Sigmoid colon (tissue), 7 donors: ENCODE measurements at regions of chr12 and their contacts with region 1.

Region 1: DNA sequence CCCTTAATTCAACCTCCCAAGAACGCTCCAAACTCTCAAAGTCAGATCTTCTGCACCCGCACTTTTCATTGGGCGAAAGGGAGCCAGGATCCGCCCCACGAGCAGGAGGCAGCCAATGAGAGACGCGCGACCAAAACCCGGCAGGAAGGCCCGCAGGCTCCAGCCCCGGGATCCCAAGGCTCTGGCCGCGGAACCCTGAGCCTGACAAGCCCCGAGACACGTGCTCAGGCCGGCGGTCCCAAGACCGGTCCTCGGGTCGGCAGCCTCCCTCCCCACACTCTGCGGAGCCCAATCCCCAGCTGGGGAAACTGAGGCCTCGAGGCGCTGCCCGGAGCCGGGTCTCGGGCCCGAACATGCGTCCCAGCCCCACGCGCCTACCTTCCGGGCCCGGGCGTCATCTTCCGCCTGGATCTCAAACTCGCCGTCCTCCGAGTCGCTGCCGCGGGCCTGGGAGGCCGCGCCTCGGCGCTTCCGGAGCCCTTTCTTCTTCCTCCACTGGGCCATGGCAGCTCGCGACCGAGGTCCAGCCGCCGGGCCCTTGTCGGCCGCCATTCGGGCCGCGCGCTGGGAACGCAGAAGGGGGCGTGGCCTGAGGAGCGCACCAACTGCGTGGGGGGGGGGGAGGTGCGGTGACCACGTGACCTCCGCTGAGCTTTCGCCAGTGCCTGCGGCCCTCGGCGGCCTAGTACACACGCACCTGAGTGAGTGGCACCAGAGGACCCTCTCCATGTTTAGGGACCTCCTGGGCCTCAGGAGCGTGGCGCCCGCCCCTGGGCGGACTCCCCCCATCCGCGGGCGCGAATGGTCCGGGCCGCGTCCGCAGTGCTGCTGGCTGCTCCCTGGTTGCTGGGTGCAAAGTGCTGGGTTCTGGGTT is at the starts of genes DDX54 and RITA1:
- DNase-seq: peak; percentile 95
- H3K4me3 ChIP-seq: peak within 1 kb of the TSS; percentile 77 to 99 (median 86)
- H3K27ac ChIP-seq: peak within 1 kb of the TSS; percentile 93 to 97 (median 96)
- H3K4me1 ChIP-seq: peaks cover 0 to 30% (median 26%) of the 10 kb centered on the region in 4 donors
- H3K27me3 ChIP-seq: no peaks in the 10 kb centered on the region
- CTCF ChIP-seq: no peak
- EP300 ChIP-seq: no peak
- POLR2A ChIP-seq: no peak
- total RNA-seq, gene DDX54: 24.5 to 47.4 (median 40.8) TPM
- total RNA-seq, gene RITA1: 12.5 to 18.3 (median 15.5) TPM

Region 2: GRCh38 chr12:113120670-113121370 is 64.3 kb before region 1 on chr12:
- intact Hi-C with region 1: no loop called
- DNase-seq: no peak
- H3K4me3 ChIP-seq: no peak overlapping the region
- H3K27ac ChIP-seq: no peak overlapping the region
- H3K4me1 ChIP-seq: no peaks in the 10 kb centered on the region
- H3K27me3 ChIP-seq: peaks cover 0 to 17% (median 6%) of the 10 kb centered on the region in 3 donors
- CTCF ChIP-seq: no peak
- EP300 ChIP-seq: no peak
- POLR2A ChIP-seq: no peak

Region 3: GRCh38 chr12:113221181-113221997 is 36.3 kb after region 1 on chr12 and contains the start of gene TPCN1:
- intact Hi-C with region 1: loop called (anchors 2 kb)
- DNase-seq: peak; percentile 100
- H3K4me3 ChIP-seq: peak within 1 kb of the TSS; percentile 77 to 97 (median 94)
- H3K27ac ChIP-seq: peak within 1 kb of the TSS; percentile 93 to 98 (median 96)
- H3K4me1 ChIP-seq: peaks cover 0 to 38% (median 30%) of the 10 kb centered on the region in 4 donors
- H3K27me3 ChIP-seq: no peaks in the 10 kb centered on the region
- CTCF ChIP-seq: no peak
- EP300 ChIP-seq: no peak
- POLR2A ChIP-seq: peak; percentile 82 to 89
- total RNA-seq, gene TPCN1: 25.7 to 51.5 (median 28.9) TPM

Region 4: DNA sequence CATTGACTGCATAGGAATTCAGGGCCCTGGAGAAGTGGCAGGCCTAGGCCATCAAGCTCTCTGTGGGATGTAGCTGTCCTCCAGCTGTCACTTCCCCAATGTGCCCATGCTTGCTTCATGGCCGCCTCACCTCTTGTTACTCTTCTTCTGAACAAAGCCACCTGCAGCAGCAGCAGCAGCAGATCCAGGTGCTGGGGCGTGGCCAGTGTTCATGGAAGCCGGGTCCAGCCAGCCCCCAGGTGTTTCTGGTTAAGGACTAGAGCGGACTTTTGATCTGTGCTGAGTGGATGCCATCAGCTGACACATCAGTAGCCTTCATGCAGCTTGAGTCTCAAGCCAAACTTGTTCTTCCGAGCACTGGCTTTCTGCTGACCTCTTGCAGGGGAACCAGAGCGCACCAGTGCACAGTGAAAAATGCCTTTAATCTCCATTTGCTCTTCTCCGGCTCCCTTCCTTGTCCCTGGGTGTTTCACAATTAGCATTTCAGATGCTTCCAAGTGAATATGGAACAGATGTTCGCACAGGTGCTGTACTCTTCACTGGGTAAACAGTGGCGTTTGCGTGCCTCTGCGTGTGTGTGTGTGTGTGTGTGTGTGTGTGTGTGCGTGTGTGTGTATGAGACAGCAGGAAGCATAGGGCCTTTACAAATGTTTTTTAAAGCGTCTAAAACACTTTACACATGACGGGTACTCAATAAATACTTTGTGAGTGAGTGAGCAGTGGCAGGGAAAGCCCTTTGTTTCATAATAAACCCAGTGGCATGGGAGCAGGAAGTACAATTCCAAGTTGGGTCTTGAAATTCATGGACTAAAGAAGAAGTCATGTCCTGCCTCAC is 56.3 kb after region 1 on chr12:
- intact Hi-C with region 1: loop called (anchors 10 kb)
- DNase-seq: no peak
- H3K4me3 ChIP-seq: no peak overlapping the region
- H3K27ac ChIP-seq: peak overlapping the region in 3 of 4 donors; percentile 3 to 33 (median 29)
- H3K4me1 ChIP-seq: peaks cover 5 to 63% (median 43%) of the 10 kb centered on the region in 4 donors
- H3K27me3 ChIP-seq: no peaks in the 10 kb centered on the region
- CTCF ChIP-seq: no peak
- EP300 ChIP-seq: no peak
- POLR2A ChIP-seq: no peak

Region 5: GRCh38 chr12:113299619-113300237 is 114.6 kb after region 1 on chr12:
- intact Hi-C with region 1: no loop called
- DNase-seq: peak; percentile 81
- H3K4me3 ChIP-seq: no peak overlapping the region
- H3K27ac ChIP-seq: peak overlapping the region in 3 of 4 donors; percentile 4 to 56 (median 31)
- H3K4me1 ChIP-seq: peaks cover 0 to 13% (median 9%) of the 10 kb centered on the region in 4 donors
- H3K27me3 ChIP-seq: no peaks in the 10 kb centered on the region
- CTCF ChIP-seq: no peak
- EP300 ChIP-seq: no peak
- POLR2A ChIP-seq: no peak

Region 6: DNA sequence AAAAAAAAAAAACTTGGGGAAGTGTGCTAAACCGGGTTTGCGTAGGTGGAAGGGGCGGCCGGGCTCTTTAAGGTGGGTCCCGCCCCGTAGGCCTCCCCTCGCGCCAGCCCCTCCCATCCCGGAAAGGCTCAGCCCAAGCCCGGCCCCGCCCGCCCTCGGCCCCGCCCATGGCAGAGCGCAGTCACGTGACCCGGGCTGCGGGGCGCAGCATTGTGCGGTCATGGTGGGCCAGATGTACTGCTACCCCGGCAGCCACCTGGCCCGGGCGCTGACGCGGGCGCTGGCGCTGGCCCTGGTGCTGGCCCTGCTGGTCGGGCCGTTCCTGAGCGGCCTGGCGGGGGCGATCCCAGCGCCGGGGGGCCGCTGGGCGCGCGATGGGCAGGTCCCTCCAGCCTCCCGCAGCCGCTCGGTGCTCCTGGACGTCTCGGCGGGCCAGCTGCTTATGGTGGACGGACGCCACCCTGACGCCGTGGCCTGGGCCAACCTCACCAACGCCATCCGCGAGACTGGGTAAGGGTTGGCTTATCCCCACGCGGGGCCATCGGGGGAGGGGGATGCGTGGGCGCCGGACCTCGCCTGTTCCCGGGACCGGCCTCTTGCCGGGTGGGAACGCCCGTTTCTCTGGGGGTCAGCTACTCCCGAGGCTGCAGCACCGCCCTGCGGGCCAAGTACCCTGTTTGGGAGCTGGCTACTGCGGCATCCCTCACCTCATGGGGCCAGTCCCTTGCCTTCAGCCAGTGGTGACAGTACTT is 173.4 kb after region 1 on chr12 and contains the start of gene PLBD2:
- intact Hi-C with region 1: loop called (anchors 2 kb)
- DNase-seq: peak; percentile 97
- H3K4me3 ChIP-seq: peak within 1 kb of the TSS; percentile 47 to 90 (median 86)
- H3K27ac ChIP-seq: peak within 1 kb of the TSS; percentile 85 to 91 (median 88)
- H3K4me1 ChIP-seq: peaks cover 0 to 21% (median 14%) of the 10 kb centered on the region in 4 donors
- H3K27me3 ChIP-seq: no peaks in the 10 kb centered on the region
- CTCF ChIP-seq: no peak
- EP300 ChIP-seq: no peak
- POLR2A ChIP-seq: no peak
- total RNA-seq, gene PLBD2: 13.2 to 39.1 (median 16.4) TPM